ENCODE measurements at regions of chr3 and their contacts with region 1.

Region 1: GRCh38 chr3:138068579-138069174 is 46.7 kb downstream of the DZIP1L start:
- DNase-seq: peak; percentile 82
- H3K4me3 Mint-ChIP-seq: no peak overlapping the region
- H3K27ac Mint-ChIP-seq: no peak overlapping the region
- H3K4me1 Mint-ChIP-seq: no peaks in the 10 kb centered on the region
- H3K27me3 Mint-ChIP-seq: no peaks in the 10 kb centered on the region
- CTCF ChIP-seq: peak; percentile 98

Region 2: DNA sequence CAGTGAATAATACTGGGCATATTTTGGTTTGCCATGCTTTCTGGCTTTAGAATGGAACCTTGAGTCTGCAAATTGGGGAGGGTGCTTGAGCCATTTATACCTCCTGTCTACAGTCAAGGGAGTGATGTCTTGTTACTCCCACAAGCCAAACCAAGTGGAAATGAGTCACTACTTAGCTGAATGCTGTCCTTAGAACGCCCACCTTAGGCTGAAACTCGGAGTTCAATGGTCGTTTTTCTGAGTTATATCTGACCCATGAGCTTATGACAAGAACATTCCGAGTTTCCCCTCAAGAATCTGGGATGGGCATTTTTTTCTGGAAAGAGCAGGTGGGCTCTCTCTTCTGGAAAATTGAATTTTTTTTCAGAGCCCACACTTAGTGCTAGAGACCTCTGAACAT is 76.1 kb before region 1 on chr3:
- CTCF ChIA-PET with region 1: no interaction called
- POLR2A ChIA-PET with region 1: no interaction called
- intact Hi-C with region 1: no loop called
- DNase-seq: no peak
- H3K4me3 Mint-ChIP-seq: no peak overlapping the region
- H3K27ac Mint-ChIP-seq: no peak overlapping the region
- H3K4me1 Mint-ChIP-seq: no peaks in the 10 kb centered on the region
- H3K27me3 Mint-ChIP-seq: no peaks in the 10 kb centered on the region
- CTCF ChIP-seq: no peak

Region 3: GRCh38 chr3:138009476-138010272 is 59.0 kb before region 1 on chr3 and contains the start of gene CLDN18:
- CTCF ChIA-PET with region 1: no interaction called
- POLR2A ChIA-PET with region 1: no interaction called
- intact Hi-C with region 1: no loop called
- DNase-seq: no peak
- H3K4me3 Mint-ChIP-seq: no peak within 1 kb of the TSS
- H3K27ac Mint-ChIP-seq: no peak within 1 kb of the TSS
- H3K4me1 Mint-ChIP-seq: no peaks in the 10 kb centered on the region
- H3K27me3 Mint-ChIP-seq: no peaks in the 10 kb centered on the region
- CTCF ChIP-seq: no peak
- total RNA-seq, gene CLDN18: not detected in 2 replicates

Region 4: DNA sequence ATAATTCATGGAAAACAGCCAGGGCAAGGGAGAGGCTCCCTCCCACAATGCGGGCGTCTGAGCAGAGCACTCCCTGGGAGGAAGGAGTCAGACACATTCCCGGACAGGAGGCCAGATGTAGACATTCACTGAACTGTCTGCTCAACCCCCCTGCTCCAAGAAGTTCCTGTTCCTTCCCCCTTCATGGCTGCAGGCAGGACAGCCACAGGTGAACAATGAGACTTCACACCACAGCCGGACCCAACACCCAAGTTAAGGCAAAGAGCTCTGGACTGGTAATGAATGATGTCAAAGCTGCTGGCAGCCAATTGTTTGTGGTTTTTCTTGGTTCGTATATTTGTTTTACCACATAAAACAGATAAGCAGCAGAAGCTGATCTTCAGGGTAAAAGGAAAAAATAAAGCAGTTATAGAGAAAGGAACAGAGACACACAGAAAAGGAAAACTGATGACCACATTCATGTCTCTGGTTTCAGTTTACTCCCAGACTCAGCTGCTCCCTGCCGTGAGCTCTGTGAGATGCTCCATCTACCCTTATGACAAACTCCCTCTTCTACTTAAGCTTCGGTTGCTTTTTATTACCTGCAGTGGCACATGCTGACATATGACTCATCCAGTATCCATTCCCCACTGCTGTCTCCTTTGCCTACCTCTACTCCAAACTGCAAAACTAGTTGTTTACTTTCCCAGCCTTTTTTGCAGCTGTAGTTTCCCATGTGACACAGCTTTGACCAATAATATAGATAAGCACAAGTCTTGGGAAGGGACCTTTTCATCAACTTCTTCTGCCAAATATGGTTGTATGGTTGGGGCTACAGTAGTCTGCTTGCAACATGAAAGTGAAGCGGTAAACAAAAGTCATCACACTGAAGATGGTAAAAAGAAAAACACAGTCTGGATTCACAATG is 13.7 kb after region 1 on chr3:
- CTCF ChIA-PET with region 1: interaction called, 15 read pairs
- POLR2A ChIA-PET with region 1: no interaction called
- intact Hi-C with region 1: no loop called
- DNase-seq: peak; percentile 93
- H3K4me3 Mint-ChIP-seq: peak overlapping the region; percentile 63
- H3K27ac Mint-ChIP-seq: peak overlapping the region; percentile 90
- H3K4me1 Mint-ChIP-seq: peaks cover 50% of the 10 kb centered on the region
- H3K27me3 Mint-ChIP-seq: no peaks in the 10 kb centered on the region
- CTCF ChIP-seq: no peak

Region 5: GRCh38 chr3:138089091-138089490 is 20.4 kb after region 1 on chr3:
- CTCF ChIA-PET with region 1: interaction called, 14 read pairs
- POLR2A ChIA-PET with region 1: no interaction called
- intact Hi-C with region 1: no loop called
- DNase-seq: peak; percentile 60
- H3K4me3 Mint-ChIP-seq: no peak overlapping the region
- H3K27ac Mint-ChIP-seq: peak overlapping the region; percentile 35
- H3K4me1 Mint-ChIP-seq: peaks cover 15% of the 10 kb centered on the region
- H3K27me3 Mint-ChIP-seq: no peaks in the 10 kb centered on the region
- CTCF ChIP-seq: no peak

Region 6: GRCh38 chr3:138108099-138108498 is 39.4 kb after region 1 on chr3:
- CTCF ChIA-PET with region 1: interaction called, 743 read pairs
- POLR2A ChIA-PET with region 1: no interaction called
- intact Hi-C with region 1: no loop called
- DNase-seq: no peak
- H3K4me3 Mint-ChIP-seq: no peak overlapping the region
- H3K27ac Mint-ChIP-seq: no peak overlapping the region
- H3K4me1 Mint-ChIP-seq: peaks cover 4% of the 10 kb centered on the region
- H3K27me3 Mint-ChIP-seq: no peaks in the 10 kb centered on the region
- CTCF ChIP-seq: no peak

Region 7: GRCh38 chr3:138118612-138119422 is 50.1 kb after region 1 on chr3:
- CTCF ChIA-PET with region 1: interaction called, 743 read pairs
- POLR2A ChIA-PET with region 1: interaction called, 7 read pairs
- intact Hi-C with region 1: loop called (anchors 1 kb)
- DNase-seq: peak; percentile 87
- H3K4me3 Mint-ChIP-seq: no peak overlapping the region
- H3K27ac Mint-ChIP-seq: no peak overlapping the region
- H3K4me1 Mint-ChIP-seq: peaks cover 19% of the 10 kb centered on the region
- H3K27me3 Mint-ChIP-seq: no peaks in the 10 kb centered on the region
- CTCF ChIP-seq: peak; percentile 91

Region 8: DNA sequence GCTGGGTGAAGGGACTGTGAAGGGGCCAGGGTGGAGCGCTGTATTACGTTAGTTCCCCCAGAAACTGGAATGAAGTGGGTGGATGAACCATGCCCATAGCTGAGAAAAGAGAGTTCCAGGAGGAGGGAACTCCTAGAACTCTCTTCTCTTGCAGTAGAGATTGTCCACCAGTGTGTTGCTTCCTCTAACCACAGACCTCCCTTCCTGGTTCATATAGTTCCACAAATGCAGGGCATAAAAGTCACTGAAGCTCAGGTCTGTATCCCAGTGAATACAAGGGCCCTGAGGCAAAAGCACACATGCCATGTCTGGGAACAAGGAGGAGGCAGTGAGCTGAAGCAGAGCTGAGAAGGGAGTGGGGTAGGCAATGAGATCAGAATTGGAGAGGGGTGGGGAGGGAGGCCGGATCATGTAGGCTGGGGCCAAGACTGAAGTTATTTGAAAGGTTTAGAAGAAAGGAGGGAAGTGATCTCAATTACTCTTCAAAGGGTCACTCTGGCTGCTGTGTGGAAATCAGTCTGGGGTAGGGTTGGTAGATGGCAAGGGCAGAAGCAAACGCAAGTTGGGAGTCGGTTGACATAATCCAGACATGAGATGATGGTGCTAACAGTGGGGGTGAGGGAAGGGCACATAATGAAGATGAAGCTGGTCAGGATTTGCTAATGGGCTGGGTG is 57.0 kb after region 1 on chr3:
- CTCF ChIA-PET with region 1: interaction called, 743 read pairs
- POLR2A ChIA-PET with region 1: no interaction called
- intact Hi-C with region 1: no loop called
- DNase-seq: peak; percentile 31
- H3K4me3 Mint-ChIP-seq: no peak overlapping the region
- H3K27ac Mint-ChIP-seq: no peak overlapping the region
- H3K4me1 Mint-ChIP-seq: peaks cover 10% of the 10 kb centered on the region
- H3K27me3 Mint-ChIP-seq: no peaks in the 10 kb centered on the region
- CTCF ChIP-seq: no peak

Region 9: DNA sequence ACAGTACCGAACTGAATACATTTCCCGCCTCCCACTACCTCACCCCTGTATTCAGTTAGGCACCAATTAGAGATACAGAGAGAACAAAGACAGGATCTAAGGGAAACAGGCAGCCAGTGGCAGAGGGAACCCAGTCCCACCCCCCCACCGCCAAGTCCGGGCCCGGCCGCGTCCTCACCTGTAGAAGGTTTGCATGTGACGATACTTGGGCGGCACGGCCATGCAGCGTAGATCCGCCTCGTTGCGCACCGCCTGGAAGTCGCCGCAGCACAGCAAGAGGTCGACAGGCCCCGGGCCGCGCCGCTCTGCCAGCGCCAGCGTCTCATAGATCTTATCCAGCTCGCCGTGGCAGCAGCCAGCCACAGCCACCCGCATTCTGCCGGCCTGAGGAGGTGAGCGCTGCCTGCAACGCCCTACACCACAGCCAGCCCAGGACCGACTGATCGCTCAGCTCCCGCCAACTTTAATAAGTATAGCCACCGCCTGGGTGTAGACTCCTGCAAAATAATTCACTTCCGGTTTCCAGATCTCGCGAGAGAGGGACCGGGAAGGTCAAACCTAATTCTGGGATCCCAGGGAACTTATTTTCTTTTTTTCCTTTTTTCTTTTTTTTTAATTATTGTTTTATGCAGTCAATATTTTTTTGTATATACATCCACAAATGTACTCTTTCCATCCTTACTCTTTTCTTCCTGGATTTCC is 105.9 kb after region 1 on chr3 and contains the start of gene DBR1:
- CTCF ChIA-PET with region 1: interaction called, 3 read pairs
- POLR2A ChIA-PET with region 1: no interaction called
- intact Hi-C with region 1: loop called (anchors 1 kb)
- DNase-seq: peak; percentile 90
- H3K4me3 Mint-ChIP-seq: peak within 1 kb of the TSS; percentile 89
- H3K27ac Mint-ChIP-seq: peak within 1 kb of the TSS; percentile 93
- H3K4me1 Mint-ChIP-seq: peaks cover 12% of the 10 kb centered on the region
- H3K27me3 Mint-ChIP-seq: peaks cover 11% of the 10 kb centered on the region
- CTCF ChIP-seq: no peak
- total RNA-seq, gene DBR1: 12.4 and 13.3 TPM in 2 replicates